ENCODE measurements at regions of chr6 and their contacts with region 1.

Region 1: GRCh38 chr6:30672445-30673253 is at the start of gene DHX16:
- DNase-seq: peak; percentile 97

Region 2: DNA sequence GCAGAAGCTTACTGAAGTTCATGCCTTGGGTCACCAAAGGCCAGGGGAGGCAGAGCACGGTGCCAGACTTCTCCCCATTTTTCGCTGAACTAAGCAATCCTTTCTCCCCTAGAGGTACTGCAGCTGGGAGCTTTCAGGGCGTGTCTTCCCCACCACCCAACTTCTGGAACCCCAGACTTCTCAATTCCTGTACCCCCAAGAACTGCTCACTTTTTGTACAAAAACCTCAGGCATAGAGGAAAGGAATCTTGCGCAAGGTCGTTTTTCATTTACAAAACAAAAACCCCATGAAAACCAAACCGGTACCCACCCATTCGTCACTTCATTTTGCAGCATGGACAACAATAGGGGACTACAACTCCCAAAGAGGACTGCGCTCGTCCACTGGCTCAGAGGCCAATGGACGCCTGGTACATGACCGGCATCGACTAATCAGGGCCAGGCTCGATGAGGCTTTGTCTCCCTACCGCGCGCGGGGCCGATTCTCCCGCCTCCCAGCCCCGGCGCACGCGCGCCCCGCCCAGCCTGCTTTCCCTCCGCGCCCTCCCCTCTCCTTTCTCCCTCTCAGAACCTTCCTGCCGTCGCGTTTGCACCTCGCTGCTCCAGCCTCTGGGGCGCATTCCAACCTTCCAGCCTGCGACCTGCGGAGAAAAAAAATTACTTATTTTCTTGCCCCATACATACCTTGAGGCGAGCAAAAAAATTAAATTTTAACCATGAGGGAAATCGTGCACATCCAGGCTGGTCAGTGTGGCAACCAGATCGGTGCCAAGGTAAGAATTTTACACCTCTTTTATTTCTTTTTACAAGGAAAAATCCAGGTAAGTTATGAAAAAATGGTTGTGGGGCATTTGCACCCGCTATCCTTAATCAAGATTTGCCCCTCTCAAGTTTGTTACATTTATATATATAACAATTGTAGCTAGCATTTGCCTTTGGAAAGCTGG is 47.4 kb after region 1 on chr6 and contains the start of gene TUBB:
- in situ Hi-C with region 1: loop called (anchors 10 kb)
- DNase-seq: peak; percentile 97